ENCODE measurements at regions of chr2 and their contacts with region 1.

Region 1: DNA sequence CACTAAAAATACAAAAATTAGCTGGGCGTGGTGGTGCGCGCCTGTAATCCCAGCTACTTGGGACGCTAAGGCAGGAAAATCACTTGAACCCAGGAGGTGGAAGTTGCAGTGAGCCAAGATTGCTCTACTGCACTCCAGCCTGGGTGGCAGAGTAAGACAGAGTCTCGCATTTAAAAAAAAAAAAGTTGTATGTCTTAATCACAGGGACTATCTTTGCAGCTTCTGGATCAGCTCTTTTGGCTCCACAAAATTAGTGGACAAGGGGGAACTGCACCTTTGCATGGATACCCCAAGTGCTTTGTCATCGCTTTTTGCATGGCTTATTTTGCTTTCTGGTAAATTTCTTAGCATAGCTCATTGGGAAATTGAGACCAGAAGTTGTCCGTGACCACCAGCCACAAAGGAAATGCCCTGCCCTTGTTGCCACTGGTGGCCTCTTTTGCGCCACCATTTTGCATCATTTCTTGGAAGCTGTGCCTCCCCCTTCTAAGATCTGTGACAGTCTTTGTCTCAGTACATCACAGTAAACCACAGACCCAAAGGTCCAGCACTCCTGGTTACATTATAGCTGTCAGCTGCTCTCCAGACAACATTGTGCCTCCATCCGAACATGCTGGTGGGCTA is 43.9 kb upstream of the PCBP1 start:
- DNase-seq: peak in 1 of 2 donors; percentile 28
- ATAC-seq: no peak
- H3K4me3 ChIP-seq: no peak overlapping the region
- H3K27ac ChIP-seq: peak overlapping the region in 1 of 4 donors; percentile 77
- H3K4me1 ChIP-seq: peaks cover 28 to 29% of the 10 kb centered on the region in 2 donors
- H3K27me3 ChIP-seq: no peaks in the 10 kb centered on the region
- CTCF ChIP-seq: no peak
- POLR2A ChIP-seq: no peak

Region 2: GRCh38 chr2:69973335-69973735 is 70.0 kb before region 1 on chr2:
- in situ Hi-C with region 1: no loop called
- intact Hi-C with region 1: no loop called
- DNase-seq: no peak
- ATAC-seq: no peak
- H3K4me3 ChIP-seq: no peak overlapping the region
- H3K27ac ChIP-seq: no peak overlapping the region
- H3K4me1 ChIP-seq: no peaks in the 10 kb centered on the region
- H3K27me3 ChIP-seq: no peaks in the 10 kb centered on the region
- CTCF ChIP-seq: no peak
- POLR2A ChIP-seq: no peak

Region 3: GRCh38 chr2:70009762-70010575 is 33.4 kb before region 1 on chr2:
- in situ Hi-C with region 1: no loop called
- intact Hi-C with region 1: loop called (anchors 1 kb)
- DNase-seq: no peak
- ATAC-seq: no peak
- H3K4me3 ChIP-seq: no peak overlapping the region
- H3K27ac ChIP-seq: no peak overlapping the region
- H3K4me1 ChIP-seq: peaks cover 15 to 16% of the 10 kb centered on the region in 2 donors
- H3K27me3 ChIP-seq: no peaks in the 10 kb centered on the region
- CTCF ChIP-seq: no peak
- POLR2A ChIP-seq: no peak

Region 4: GRCh38 chr2:70029814-70030409 is 13.5 kb before region 1 on chr2:
- in situ Hi-C with region 1: no loop called
- intact Hi-C with region 1: no loop called
- DNase-seq: peak; percentile 35 to 62
- ATAC-seq: peak; percentile 60 to 87
- H3K4me3 ChIP-seq: no peak overlapping the region
- H3K27ac ChIP-seq: peak overlapping the region; percentile 68 to 81 (median 76)
- H3K4me1 ChIP-seq: peaks cover 18 to 21% of the 10 kb centered on the region in 2 donors
- H3K27me3 ChIP-seq: no peaks in the 10 kb centered on the region
- CTCF ChIP-seq: no peak
- POLR2A ChIP-seq: peak in 1 of 2 donors; percentile 39

Region 5: GRCh38 chr2:70919672-70920366 is 876.5 kb after region 1 on chr2:
- in situ Hi-C with region 1: no loop called
- intact Hi-C with region 1: no loop called
- DNase-seq: peak; percentile 48 to 52
- ATAC-seq: peak; percentile 83 to 84
- H3K4me3 ChIP-seq: no peak overlapping the region
- H3K27ac ChIP-seq: no peak overlapping the region
- H3K4me1 ChIP-seq: no peaks in the 10 kb centered on the region
- H3K27me3 ChIP-seq: peaks cover 0 to 3% (median 0%) of the 10 kb centered on the region in 3 donors
- CTCF ChIP-seq: peak; percentile 78 to 89 (median 81)
- POLR2A ChIP-seq: no peak